Motor neuron (in vitro differentiated cells): ENCODE measurements at regions of chr5 and their contacts with region 1.

Region 1: GRCh38 chr5:7868773-7869473 is at the starts of genes FASTKD3 and MTRR:
- ATAC-seq: peak; percentile 93 to 100 (median 99)
- H3K4me3 ChIP-seq: peak within 1 kb of the TSS; percentile 84 to 100 (median 96)
- H3K27ac ChIP-seq: peak within 1 kb of the TSS; percentile 55 to 71
- H3K4me1 ChIP-seq: peaks cover 11 to 19% of the 10 kb centered on the region in 2 donors
- total RNA-seq, gene FASTKD3: 9.4 to 20.4 (median 12.5) TPM
- total RNA-seq, gene MTRR: 18.2 to 58.5 (median 35.1) TPM

Region 2: GRCh38 chr5:6780802-6781391 is 1088.0 kb before region 1 on chr5:
- in situ Hi-C with region 1: loop called in 1 of 9 experiments (anchors 25 kb)
- ATAC-seq: peak in 1 of 8 experiments; percentile 20
- H3K4me3 ChIP-seq: no peak overlapping the region
- H3K27ac ChIP-seq: no peak overlapping the region
- H3K4me1 ChIP-seq: no peaks in the 10 kb centered on the region

Region 3: DNA sequence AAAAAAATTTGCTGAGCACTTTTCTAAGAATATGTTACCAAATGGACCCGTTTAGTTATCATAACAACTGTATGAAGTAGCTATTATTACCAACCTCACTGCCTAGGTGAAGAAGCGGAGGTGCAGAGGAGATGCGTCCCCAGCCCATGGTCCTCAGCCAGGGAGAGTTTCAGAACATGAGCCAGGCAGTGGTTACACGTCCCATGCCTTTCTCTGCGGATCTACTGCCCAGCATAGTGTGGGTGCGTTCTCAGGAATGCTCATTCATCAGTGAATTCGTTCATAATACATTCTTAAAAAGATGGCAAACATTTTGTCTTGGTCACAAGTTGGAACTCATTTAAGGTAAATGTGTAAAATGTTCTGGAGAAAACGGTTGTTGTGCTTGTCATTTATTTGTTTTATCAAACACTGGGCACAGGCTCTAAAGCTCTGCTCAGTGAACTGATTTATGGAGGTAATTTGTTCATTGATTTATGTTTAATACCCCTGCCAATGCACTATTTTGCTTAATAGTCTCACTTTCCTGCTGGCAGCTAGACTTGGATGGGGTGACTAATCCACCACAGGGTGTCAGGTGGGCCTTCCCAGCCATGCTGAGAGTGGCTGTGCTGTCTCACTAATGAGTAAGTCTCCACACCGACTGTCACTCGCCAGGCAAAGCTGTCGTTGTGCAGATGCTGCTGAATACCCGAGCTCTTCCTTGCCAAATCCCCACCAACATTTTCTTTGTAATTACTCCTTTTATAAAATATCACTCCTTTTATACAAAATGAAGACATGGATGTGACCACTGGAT is 906.9 kb before region 1 on chr5:
- in situ Hi-C with region 1: no loop called
- ATAC-seq: peak in 5 of 8 experiments; percentile 99 to 100 (median 100)
- H3K4me3 ChIP-seq: no peak overlapping the region
- H3K27ac ChIP-seq: no peak overlapping the region
- H3K4me1 ChIP-seq: peaks cover 4 to 6% of the 10 kb centered on the region in 2 donors

Region 4: GRCh38 chr5:7261049-7261448 is 607.9 kb before region 1 on chr5:
- in situ Hi-C with region 1: loop called in 1 of 9 experiments (anchors 25 kb)
- ATAC-seq: peak; percentile 36 to 87 (median 60)
- H3K4me3 ChIP-seq: no peak overlapping the region
- H3K27ac ChIP-seq: no peak overlapping the region
- H3K4me1 ChIP-seq: peaks cover 0 to 3% of the 10 kb centered on the region in 2 donors

Region 5: GRCh38 chr5:7762267-7762666 is 106.7 kb before region 1 on chr5:
- in situ Hi-C with region 1: no loop called
- ATAC-seq: no peak
- H3K4me3 ChIP-seq: no peak overlapping the region
- H3K27ac ChIP-seq: no peak overlapping the region
- H3K4me1 ChIP-seq: peaks cover 7 to 14% of the 10 kb centered on the region in 2 donors